ENCODE measurements at regions of chr11 and their contacts with region 1.

Region 1: DNA sequence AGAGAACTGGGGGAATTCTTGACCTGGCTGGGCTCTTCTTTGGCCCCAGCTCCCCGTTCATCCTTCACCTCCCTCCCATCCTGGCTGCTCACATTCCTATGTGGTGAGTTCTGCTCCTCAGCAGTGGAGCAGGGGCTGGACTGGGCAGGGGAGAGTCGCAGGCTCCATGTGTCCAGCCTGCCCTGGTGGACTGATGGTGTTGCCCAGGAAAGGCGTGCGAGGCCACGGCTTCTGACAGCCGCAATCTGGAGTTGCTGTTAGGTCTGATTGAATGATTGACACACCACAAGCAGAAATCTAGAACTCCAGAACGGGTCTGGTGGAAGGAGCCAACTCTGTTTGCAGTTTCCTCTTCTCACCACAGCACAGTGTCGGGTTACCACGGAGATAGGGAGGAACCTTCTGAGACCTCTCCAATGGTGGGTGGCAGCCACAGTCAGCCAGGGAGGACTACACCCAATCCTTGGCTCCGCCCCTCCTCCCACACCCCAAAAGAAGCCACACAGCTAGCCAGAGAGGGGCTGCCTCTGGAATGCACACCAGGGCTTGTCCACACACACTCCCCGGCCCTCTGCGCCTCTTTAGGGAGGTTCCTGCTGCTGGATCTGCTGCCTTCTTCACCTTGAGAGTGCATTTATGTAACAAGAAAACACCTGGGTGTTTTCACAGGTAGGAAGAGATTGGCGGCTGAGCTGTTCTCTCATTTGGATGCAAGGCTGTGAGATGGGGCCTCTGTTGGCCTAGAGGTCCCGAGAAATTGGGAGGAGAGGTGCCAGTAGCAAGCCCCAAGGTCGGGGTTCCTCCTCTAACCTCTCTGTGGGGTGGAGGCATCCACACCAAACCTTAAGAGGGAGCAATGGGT is 56.4 kb upstream of the CD44 start:
- DNase-seq: peak; percentile 85
- H3K4me3 Mint-ChIP-seq: peak overlapping the region; percentile 56
- H3K27ac Mint-ChIP-seq: peak overlapping the region; percentile 91
- H3K4me1 Mint-ChIP-seq: peaks cover 82% of the 10 kb centered on the region
- H3K27me3 Mint-ChIP-seq: no peaks in the 10 kb centered on the region

Region 2: GRCh38 chr11:35030716-35031213 is 51.8 kb before region 1 on chr11:
- intact Hi-C with region 1: loop called (anchors 1 kb)
- DNase-seq: no peak
- H3K4me3 Mint-ChIP-seq: peak overlapping the region; percentile 75
- H3K27ac Mint-ChIP-seq: peak overlapping the region; percentile 88
- H3K4me1 Mint-ChIP-seq: peaks cover 50% of the 10 kb centered on the region
- H3K27me3 Mint-ChIP-seq: peaks cover 8% of the 10 kb centered on the region

Region 3: GRCh38 chr11:35138943-35139721 is 56.6 kb after region 1 on chr11 and contains the start of gene CD44:
- intact Hi-C with region 1: loop called (anchors 1 kb)
- DNase-seq: peak; percentile 58
- H3K4me3 Mint-ChIP-seq: peak within 1 kb of the TSS; percentile 97
- H3K27ac Mint-ChIP-seq: peak within 1 kb of the TSS; percentile 93
- H3K4me1 Mint-ChIP-seq: peaks cover 55% of the 10 kb centered on the region
- H3K27me3 Mint-ChIP-seq: no peaks in the 10 kb centered on the region
- total RNA-seq, gene CD44: 547 and 550 TPM in 2 replicates

Region 4: GRCh38 chr11:35173011-35173511 is 90.5 kb after region 1 on chr11:
- intact Hi-C with region 1: loop called (anchors 1 kb)
- DNase-seq: no peak
- H3K4me3 Mint-ChIP-seq: peak overlapping the region; percentile 56
- H3K27ac Mint-ChIP-seq: peak overlapping the region; percentile 75
- H3K4me1 Mint-ChIP-seq: peaks cover 92% of the 10 kb centered on the region
- H3K27me3 Mint-ChIP-seq: no peaks in the 10 kb centered on the region

Region 5: GRCh38 chr11:35343033-35343598 is 260.6 kb after region 1 on chr11:
- intact Hi-C with region 1: loop called (anchors 2 kb)
- DNase-seq: peak; percentile 65
- H3K4me3 Mint-ChIP-seq: peak overlapping the region; percentile 27
- H3K27ac Mint-ChIP-seq: peak overlapping the region; percentile 79
- H3K4me1 Mint-ChIP-seq: peaks cover 46% of the 10 kb centered on the region
- H3K27me3 Mint-ChIP-seq: peaks cover 9% of the 10 kb centered on the region

Measured in activated T-helper 1 cell treated with anti-CD3 and anti-CD28 coated beads, Interleukin-12 subunit alpha, Interleukin-12 subunit beta, Interleukin-2, Interleukin-4 antibody, amounts not matched to agents 30 ng/mL and 10 ng/mL and 1 ng/mL, durations not matched to agents 14 hours and 24 hours and 36 hours (primary cell).